ENCODE measurements at regions of chr4 and their contacts with region 1.

Region 1: GRCh38 chr4:1726146-1726934 is 5.0 kb downstream of the TACC3 start:
- DNase-seq: peak; percentile 95
- H3K4me3 ChIP-seq: no peak overlapping the region
- H3K27ac ChIP-seq: peak overlapping the region; percentile 11
- H3K4me1 ChIP-seq: peaks cover 12% of the 10 kb centered on the region
- H3K27me3 ChIP-seq: no peaks in the 10 kb centered on the region
- CTCF ChIP-seq: peak; percentile 100

Region 2: DNA sequence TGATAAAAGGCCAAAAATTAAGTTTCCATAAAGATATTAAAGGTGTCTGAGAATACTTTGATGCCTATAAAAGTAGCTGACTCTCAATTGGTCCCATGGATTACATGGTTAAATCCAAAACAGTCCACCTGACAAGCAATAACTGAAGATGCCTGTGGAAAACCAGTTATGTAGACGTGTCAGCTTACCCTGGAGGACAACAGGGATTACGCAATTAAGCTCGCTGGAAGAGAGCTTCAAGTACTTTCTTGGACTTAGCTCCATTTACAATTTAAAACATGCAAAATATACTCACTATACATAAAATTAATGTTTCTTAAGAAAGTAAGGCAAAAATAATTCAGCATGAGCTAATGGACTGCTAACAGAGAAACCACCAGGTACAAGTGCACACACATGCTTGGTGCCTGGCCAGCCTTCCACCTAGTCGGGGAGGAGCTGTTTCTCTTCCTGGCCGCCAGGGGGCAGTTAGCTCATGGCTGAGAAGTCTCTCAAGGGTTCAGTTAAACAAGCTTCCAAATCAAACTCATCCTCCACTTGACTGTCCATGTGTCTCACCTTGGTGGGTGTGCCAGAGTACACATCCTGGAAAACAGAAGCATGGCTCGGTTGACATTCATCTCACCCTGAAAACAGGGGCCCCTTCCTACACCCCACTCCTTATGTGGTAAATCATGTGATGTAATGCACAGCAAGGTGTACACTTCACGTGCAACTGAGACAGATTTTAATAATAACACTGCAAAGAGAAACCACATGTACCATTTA is 33.0 kb before region 1 on chr4:
- intact Hi-C with region 1: loop called (anchors 5 kb)
- DNase-seq: peak; percentile 62
- H3K4me3 ChIP-seq: no peak overlapping the region
- H3K27ac ChIP-seq: no peak overlapping the region
- H3K4me1 ChIP-seq: no peaks in the 10 kb centered on the region
- H3K27me3 ChIP-seq: no peaks in the 10 kb centered on the region
- CTCF ChIP-seq: peak; percentile 93

Measured in colonic mucosa (tissue), 4 donors.